ENCODE measurements at regions of chr17 and their contacts with region 1.

Region 1: GRCh38 chr17:77088455-77089123 is 52.2 kb upstream of the SEC14L1 start:
- DNase-seq: peak; percentile 94 to 97
- ATAC-seq: peak; percentile 92 to 95 (median 94)
- H3K4me3 ChIP-seq: peak overlapping the region; percentile 93
- H3K27ac ChIP-seq: peak overlapping the region; percentile 93
- H3K4me1 ChIP-seq: peaks cover 47% of the 10 kb centered on the region
- H3K27me3 ChIP-seq: no peaks in the 10 kb centered on the region
- CTCF ChIP-seq: peak; percentile 75

Region 2: DNA sequence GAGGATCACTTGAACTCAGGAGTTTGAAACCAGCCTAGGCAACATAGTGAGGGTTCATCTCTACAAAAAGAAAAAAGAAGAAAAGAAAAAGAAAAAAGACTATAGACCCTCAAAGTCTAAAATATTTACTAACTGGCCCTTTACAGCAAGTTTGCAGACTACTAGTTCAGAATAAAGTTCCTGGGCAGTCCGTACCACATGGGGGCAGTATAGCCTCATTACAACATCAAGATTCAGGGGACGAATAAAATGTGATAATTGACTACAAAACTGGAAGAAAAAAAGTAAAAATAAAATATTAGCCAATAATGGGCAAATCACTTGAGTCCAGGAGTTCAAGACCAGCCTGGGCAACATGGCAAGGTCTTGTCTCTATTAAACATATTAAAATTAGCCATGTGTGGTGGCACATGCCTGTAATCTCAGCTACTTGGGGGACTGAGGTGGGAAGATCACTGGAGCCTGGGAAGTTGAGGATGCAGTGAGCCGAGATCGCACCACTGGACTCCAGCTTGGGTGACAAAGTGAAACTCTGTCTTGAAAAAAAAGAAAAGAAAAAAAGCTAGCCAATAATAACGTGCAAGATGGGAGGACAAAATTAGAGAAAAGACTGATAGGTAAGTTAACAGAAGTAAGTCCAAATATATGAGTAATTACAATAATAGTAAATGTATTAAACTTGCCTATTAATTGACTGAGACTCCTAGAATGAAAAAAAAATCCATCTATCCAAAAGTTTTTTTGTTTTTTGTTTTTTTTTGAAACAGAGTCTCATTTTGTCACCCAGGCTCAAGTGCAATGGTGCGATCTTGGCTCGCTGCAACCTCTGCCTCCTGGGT is 77.2 kb before region 1 on chr17:
- intact Hi-C with region 1: no loop called
- DNase-seq: no peak
- ATAC-seq: no peak
- H3K4me3 ChIP-seq: no peak overlapping the region
- H3K27ac ChIP-seq: no peak overlapping the region
- H3K4me1 ChIP-seq: no peaks in the 10 kb centered on the region
- H3K27me3 ChIP-seq: peaks cover 2 to 14% (median 3%) of the 10 kb centered on the region in 3 donors
- CTCF ChIP-seq: no peak

Region 3: DNA sequence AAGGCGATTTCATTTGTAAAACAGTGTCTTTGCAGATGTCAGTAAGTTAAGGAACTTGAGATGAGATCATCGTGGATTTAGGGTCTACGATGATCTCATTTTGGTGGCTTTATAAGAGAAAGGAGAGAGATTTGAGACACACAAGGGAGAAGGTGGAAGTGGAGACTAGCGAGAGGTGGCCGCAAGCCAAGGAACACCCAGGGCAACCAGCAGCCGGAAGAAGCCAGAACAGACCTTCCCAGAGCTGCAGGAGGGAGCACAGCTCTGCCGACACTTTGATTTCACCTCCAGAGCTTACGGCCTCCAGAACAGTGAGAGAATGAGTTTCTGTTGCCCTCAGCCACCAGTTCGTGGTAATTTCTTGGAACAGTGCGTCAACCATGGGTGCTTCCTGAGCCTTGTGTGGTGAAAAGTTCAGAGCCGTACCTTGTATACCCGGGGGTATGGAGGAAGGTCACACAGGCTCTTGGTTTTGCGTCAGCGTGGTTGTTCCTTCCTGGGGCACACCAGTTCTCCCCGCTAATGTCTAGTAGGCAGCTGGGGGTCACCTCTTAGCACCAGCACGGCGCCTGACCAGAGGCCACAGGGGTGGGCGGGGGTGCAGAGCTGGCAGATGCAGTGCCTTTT is 39.3 kb after region 1 on chr17:
- intact Hi-C with region 1: no loop called
- DNase-seq: peak; percentile 75 to 85
- ATAC-seq: peak in 3 of 4 donors; percentile 7 to 34 (median 27)
- H3K4me3 ChIP-seq: peak overlapping the region; percentile 29
- H3K27ac ChIP-seq: peak overlapping the region; percentile 72
- H3K4me1 ChIP-seq: peaks cover 56% of the 10 kb centered on the region
- H3K27me3 ChIP-seq: no peaks in the 10 kb centered on the region
- CTCF ChIP-seq: no peak

Region 4: GRCh38 chr17:77145612-77146245 is 57.1 kb after region 1 on chr17:
- intact Hi-C with region 1: loop called in 1 of 2 experiments (anchors 5 kb)
- DNase-seq: peak; percentile 69 to 77
- ATAC-seq: peak; percentile 28 to 40 (median 36)
- H3K4me3 ChIP-seq: peak overlapping the region; percentile 54
- H3K27ac ChIP-seq: peak overlapping the region; percentile 99
- H3K4me1 ChIP-seq: peaks cover 64% of the 10 kb centered on the region
- H3K27me3 ChIP-seq: no peaks in the 10 kb centered on the region
- CTCF ChIP-seq: peak; percentile 14

Region 5: DNA sequence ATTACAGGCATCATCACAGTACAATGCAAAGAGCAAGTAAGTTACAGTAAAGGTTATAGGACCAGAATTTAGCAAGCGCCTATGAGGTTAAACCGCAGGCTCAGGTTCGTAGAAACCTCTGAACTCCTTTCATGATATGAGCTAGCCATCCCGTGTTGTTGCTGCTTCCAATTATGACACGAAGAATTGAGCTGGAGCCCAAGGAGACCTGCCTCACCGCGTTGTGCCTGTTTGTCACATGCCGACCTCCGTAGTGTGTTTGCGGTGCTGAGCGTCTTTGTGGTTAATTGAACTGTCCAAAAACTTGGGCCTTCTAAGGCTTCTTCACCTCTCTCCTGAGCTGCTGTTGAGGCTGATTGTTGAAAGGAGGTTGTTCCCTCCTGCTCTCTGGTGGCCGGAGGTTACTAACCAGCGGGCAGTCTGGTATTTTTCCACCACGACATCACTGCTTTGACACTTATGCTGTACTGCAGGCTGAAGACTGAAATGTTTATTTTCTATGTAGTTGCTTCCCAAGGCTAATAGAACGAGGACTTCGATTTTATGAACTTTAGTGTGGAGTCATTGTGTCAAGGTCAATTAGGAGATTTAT is 119.7 kb after region 1 on chr17:
- intact Hi-C with region 1: loop called in 1 of 2 experiments (anchors 2 kb)
- DNase-seq: no peak
- ATAC-seq: peak; percentile 77 to 85 (median 81)
- H3K4me3 ChIP-seq: peak overlapping the region; percentile 8
- H3K27ac ChIP-seq: peak overlapping the region; percentile 80
- H3K4me1 ChIP-seq: peaks cover 39% of the 10 kb centered on the region
- H3K27me3 ChIP-seq: no peaks in the 10 kb centered on the region
- CTCF ChIP-seq: peak; percentile 37

Region 6: DNA sequence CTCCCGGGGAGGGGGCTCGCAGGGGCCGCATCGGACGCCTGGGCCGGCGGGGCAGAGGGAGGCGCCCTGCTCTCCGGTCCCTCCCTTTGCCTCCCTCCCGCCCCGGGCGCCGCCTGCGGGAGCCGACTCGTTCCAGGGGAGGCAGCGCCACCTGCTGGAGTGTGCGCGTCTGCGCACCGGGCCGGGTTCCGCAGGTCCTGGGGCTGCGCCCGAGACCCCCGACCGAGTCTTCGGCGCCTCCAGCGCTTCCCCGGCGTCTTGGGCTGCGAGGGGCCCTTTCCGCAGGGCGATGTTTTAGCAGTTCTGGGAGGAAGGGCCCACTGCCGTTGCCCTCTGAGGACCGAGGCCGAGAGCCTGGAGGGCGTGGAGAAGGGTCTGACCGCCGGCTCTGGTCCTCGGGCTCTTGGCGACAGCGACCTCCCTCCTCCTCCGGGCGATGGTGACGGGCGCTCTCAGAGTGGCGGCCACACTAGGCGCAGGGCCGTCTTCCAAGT is 158.5 kb after region 1 on chr17:
- intact Hi-C with region 1: loop called (anchors 1 kb)
- DNase-seq: peak; percentile 87 to 93
- ATAC-seq: peak; percentile 92 to 98 (median 96)
- H3K4me3 ChIP-seq: peak overlapping the region; percentile 79
- H3K27ac ChIP-seq: peak overlapping the region; percentile 51
- H3K4me1 ChIP-seq: peaks cover 5% of the 10 kb centered on the region
- H3K27me3 ChIP-seq: peaks cover 0 to 5% (median 0%) of the 10 kb centered on the region in 3 donors
- CTCF ChIP-seq: peak; percentile 98

Region 7: DNA sequence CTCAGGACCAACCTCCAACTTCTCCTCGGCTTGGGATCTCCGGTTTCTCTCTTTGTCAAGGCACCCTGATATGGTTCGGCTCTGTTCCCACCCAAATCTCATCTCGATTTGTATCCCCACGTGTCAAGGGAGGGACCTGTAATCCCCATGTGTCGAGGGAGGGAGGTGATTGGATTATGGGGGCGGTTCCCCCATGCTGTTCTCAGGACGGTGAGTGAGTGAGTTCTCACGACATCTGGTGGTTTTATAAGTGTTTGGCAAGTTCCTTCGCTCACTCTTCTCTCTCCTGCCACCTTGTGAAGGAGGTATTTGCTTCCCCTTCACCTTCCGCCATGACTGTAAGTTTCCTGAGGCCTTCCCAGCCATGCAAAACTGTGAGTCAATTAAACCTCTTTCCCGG is 170.0 kb after region 1 on chr17:
- intact Hi-C with region 1: no loop called
- DNase-seq: no peak
- ATAC-seq: no peak
- H3K4me3 ChIP-seq: no peak overlapping the region
- H3K27ac ChIP-seq: no peak overlapping the region
- H3K4me1 ChIP-seq: no peaks in the 10 kb centered on the region
- H3K27me3 ChIP-seq: peaks cover 0 to 7% (median 4%) of the 10 kb centered on the region in 3 donors
- CTCF ChIP-seq: no peak

Region 8: GRCh38 chr17:77494664-77495435 is 406.3 kb after region 1 on chr17:
- intact Hi-C with region 1: loop called in 1 of 2 experiments (anchors 10 kb)
- DNase-seq: peak; percentile 79 to 87
- ATAC-seq: peak; percentile 69 to 78 (median 76)
- H3K4me3 ChIP-seq: no peak overlapping the region
- H3K27ac ChIP-seq: no peak overlapping the region
- H3K4me1 ChIP-seq: peaks cover 12% of the 10 kb centered on the region
- H3K27me3 ChIP-seq: no peaks in the 10 kb centered on the region
- CTCF ChIP-seq: peak; percentile 98

Measured in psoas muscle (tissue), 8 donors.